ENCODE measurements at regions of chr5 and their contacts with region 1.

Region 1: GRCh38 chr5:40410231-40410861 is 269.4 kb upstream of the PTGER4 start:
- DNase-seq: no peak
- ATAC-seq: peak; percentile 80
- H3K4me3 Mint-ChIP-seq: peak overlapping the region; percentile 77
- H3K27ac Mint-ChIP-seq: peak overlapping the region; percentile 94
- H3K4me1 Mint-ChIP-seq: peaks cover 51% of the 10 kb centered on the region
- H3K27me3 Mint-ChIP-seq: no peaks in the 10 kb centered on the region

Region 2: DNA sequence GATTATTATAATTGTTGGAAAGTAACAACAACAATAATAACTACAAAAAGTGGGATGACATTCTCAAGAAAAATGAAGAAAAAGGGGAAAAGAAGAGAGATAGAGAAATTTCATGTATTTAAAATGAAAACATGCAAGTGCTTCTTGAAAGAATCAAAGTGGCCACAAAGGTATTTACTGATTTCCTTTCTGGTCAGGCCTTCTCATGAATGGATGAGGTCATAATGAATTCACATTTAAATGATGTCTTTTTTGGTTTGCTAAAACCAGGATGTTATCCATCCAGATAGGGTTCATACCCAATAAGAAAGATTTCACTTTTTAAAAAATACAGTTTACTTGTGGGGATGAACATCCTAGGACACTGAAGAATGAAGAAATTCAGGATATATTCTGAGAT is 177.1 kb before region 1 on chr5:
- POLR2A ChIA-PET with region 1: no interaction called
- DNase-seq: no peak
- ATAC-seq: peak; percentile 52
- H3K4me3 Mint-ChIP-seq: no peak overlapping the region
- H3K27ac Mint-ChIP-seq: no peak overlapping the region
- H3K4me1 Mint-ChIP-seq: peaks cover 6% of the 10 kb centered on the region
- H3K27me3 Mint-ChIP-seq: peaks cover 4% of the 10 kb centered on the region

Region 3: GRCh38 chr5:40347981-40348725 is 62.2 kb before region 1 on chr5:
- POLR2A ChIA-PET with region 1: no interaction called
- DNase-seq: no peak
- ATAC-seq: no peak
- H3K4me3 Mint-ChIP-seq: no peak overlapping the region
- H3K27ac Mint-ChIP-seq: no peak overlapping the region
- H3K4me1 Mint-ChIP-seq: no peaks in the 10 kb centered on the region
- H3K27me3 Mint-ChIP-seq: peaks cover 4% of the 10 kb centered on the region

Region 4: DNA sequence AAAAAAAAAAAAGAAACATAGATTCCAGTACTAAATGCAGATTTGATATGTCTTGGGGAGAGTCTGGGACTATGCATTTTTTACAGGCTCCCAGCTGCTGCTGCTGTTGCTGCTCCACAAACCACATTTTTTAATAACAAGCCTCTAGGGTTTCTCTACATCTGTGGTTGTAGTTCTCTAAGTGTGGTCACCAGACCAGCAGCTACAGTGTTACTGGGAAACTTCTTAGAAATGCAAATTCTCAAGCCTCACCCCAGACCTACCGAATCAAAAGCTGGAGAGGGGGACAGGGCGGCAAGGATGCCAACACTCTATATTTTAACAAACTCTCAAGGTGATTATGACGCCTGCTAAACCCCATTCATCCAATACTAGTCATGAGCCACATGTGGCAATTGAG is 24.1 kb before region 1 on chr5:
- POLR2A ChIA-PET with region 1: interaction called, 43 read pairs
- DNase-seq: peak; percentile 36
- ATAC-seq: peak; percentile 71
- H3K4me3 Mint-ChIP-seq: peak overlapping the region; percentile 79
- H3K27ac Mint-ChIP-seq: peak overlapping the region; percentile 86
- H3K4me1 Mint-ChIP-seq: peaks cover 75% of the 10 kb centered on the region
- H3K27me3 Mint-ChIP-seq: no peaks in the 10 kb centered on the region

Region 5: DNA sequence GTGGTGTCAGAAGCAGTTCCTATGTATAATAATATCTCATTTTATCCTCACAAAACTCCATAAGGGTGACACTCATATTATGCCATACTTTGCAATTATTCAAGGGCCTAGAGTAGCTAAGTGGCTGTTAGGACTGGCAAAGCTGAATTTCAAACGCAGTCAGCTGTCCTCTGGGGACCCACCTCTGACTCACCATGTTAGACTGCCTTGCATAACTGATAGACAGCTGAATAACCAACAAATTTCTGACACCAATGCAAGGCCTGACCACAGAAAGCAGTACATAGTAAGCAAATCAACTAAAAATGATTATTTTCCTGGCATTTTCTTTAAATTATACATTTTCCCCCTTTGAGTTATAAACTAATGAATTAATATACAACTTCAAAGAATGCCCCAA is 17.8 kb after region 1 on chr5:
- POLR2A ChIA-PET with region 1: interaction called, 12 read pairs
- DNase-seq: no peak
- ATAC-seq: peak; percentile 29
- H3K4me3 Mint-ChIP-seq: no peak overlapping the region
- H3K27ac Mint-ChIP-seq: peak overlapping the region; percentile 94
- H3K4me1 Mint-ChIP-seq: peaks cover 35% of the 10 kb centered on the region
- H3K27me3 Mint-ChIP-seq: no peaks in the 10 kb centered on the region

Region 6: GRCh38 chr5:40437452-40437861 is 27.1 kb after region 1 on chr5:
- POLR2A ChIA-PET with region 1: interaction called, 25 read pairs
- DNase-seq: no peak
- ATAC-seq: peak; percentile 27
- H3K4me3 Mint-ChIP-seq: peak overlapping the region; percentile 39
- H3K27ac Mint-ChIP-seq: peak overlapping the region; percentile 77
- H3K4me1 Mint-ChIP-seq: peaks cover 66% of the 10 kb centered on the region
- H3K27me3 Mint-ChIP-seq: no peaks in the 10 kb centered on the region

Region 7: GRCh38 chr5:40679155-40679913 is 269.0 kb after region 1 on chr5:
- POLR2A ChIA-PET with region 1: interaction called, 27 read pairs
- DNase-seq: peak; percentile 92
- ATAC-seq: peak; percentile 69
- H3K4me3 Mint-ChIP-seq: peak overlapping the region; percentile 95
- H3K27ac Mint-ChIP-seq: peak overlapping the region; percentile 94
- H3K4me1 Mint-ChIP-seq: peaks cover 42% of the 10 kb centered on the region
- H3K27me3 Mint-ChIP-seq: no peaks in the 10 kb centered on the region

Measured in activated naive CD8-positive, alpha-beta T cell treated with anti-CD3 and anti-CD28 coated beads, Interleukin-2, amount 10 ng/mL, durations not matched to agents 7 days and 5 days (primary cell).